Activated CD8-positive, alpha-beta T cell treated with anti-CD3 and anti-CD28 coated beads, Interleukin-2, amount 10 ng/mL, durations not matched to agents 7 days and 5 days (primary cell): ENCODE measurements at regions of chr17 and their contacts with region 1.

Region 1: GRCh38 chr17:76523084-76524037 is 14.1 kb downstream of the CYGB start:
- DNase-seq: peak; percentile 86
- ATAC-seq: peak; percentile 88
- H3K4me3 Mint-ChIP-seq: peak overlapping the region; percentile 51
- H3K27ac Mint-ChIP-seq: peak overlapping the region; percentile 65
- H3K4me1 Mint-ChIP-seq: peaks cover 28% of the 10 kb centered on the region
- H3K27me3 Mint-ChIP-seq: no peaks in the 10 kb centered on the region

Region 2: GRCh38 chr17:76537288-76537577 is 13.9 kb after region 1 on chr17:
- CTCF ChIA-PET with region 1: interaction called, 88 read pairs
- POLR2A ChIA-PET with region 1: no interaction called
- DNase-seq: no peak
- ATAC-seq: peak; percentile 20
- H3K4me3 Mint-ChIP-seq: no peak overlapping the region
- H3K27ac Mint-ChIP-seq: no peak overlapping the region
- H3K4me1 Mint-ChIP-seq: peaks cover 4% of the 10 kb centered on the region
- H3K27me3 Mint-ChIP-seq: peaks cover 43% of the 10 kb centered on the region

Region 3: GRCh38 chr17:76547184-76547641 is 23.9 kb after region 1 on chr17:
- CTCF ChIA-PET with region 1: interaction called, 88 read pairs
- POLR2A ChIA-PET with region 1: interaction called, 3 read pairs
- DNase-seq: peak; percentile 80
- ATAC-seq: peak; percentile 95
- H3K4me3 Mint-ChIP-seq: no peak overlapping the region
- H3K27ac Mint-ChIP-seq: no peak overlapping the region
- H3K4me1 Mint-ChIP-seq: peaks cover 21% of the 10 kb centered on the region
- H3K27me3 Mint-ChIP-seq: peaks cover 8% of the 10 kb centered on the region

Region 4: GRCh38 chr17:76585818-76586593 is 62.6 kb after region 1 on chr17 and contains the start of gene ST6GALNAC2:
- CTCF ChIA-PET with region 1: interaction called, 14 read pairs
- POLR2A ChIA-PET with region 1: no interaction called
- DNase-seq: peak; percentile 32
- ATAC-seq: peak; percentile 72
- H3K4me3 Mint-ChIP-seq: peak within 1 kb of the TSS; percentile 56
- H3K27ac Mint-ChIP-seq: no peak within 1 kb of the TSS
- H3K4me1 Mint-ChIP-seq: peaks cover 10% of the 10 kb centered on the region
- H3K27me3 Mint-ChIP-seq: peaks cover 57% of the 10 kb centered on the region
- total RNA-seq, gene ST6GALNAC2: not detected

Region 5: DNA sequence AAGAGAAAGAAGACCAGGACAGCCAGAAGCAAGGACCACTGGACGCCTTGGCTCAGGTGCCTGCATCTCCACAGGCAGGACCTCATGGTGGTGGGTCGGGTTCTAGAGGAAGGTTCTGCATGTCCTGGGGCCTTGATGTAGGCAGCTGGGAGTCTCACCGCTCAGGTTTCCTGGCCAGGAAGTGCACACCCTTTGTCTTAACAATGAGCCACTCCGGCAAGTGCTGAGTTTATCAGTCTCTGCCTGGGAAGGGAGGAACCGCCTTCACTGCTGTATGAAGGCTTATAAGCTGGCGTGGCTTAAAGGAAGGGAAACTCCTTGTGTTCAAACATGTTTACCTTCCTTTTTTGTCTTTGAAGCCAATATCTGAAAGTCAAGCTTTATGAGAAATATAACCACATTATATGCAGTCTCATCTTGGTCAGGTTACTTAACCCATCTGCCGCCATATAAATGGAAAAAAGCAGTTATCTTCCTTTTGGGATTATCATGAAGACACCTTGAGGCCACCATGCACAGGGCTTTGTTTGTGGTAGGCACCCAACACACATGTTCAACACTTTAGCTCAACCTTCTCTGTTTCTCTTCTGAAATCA is 120.3 kb after region 1 on chr17 and contains the start of gene ST6GALNAC1:
- CTCF ChIA-PET with region 1: no interaction called
- POLR2A ChIA-PET with region 1: no interaction called
- DNase-seq: no peak
- ATAC-seq: peak; percentile 64
- H3K4me3 Mint-ChIP-seq: no peak within 1 kb of the TSS
- H3K27ac Mint-ChIP-seq: no peak within 1 kb of the TSS
- H3K4me1 Mint-ChIP-seq: peaks cover 9% of the 10 kb centered on the region
- H3K27me3 Mint-ChIP-seq: peaks cover 11% of the 10 kb centered on the region
- total RNA-seq, gene ST6GALNAC1: not detected